ENCODE measurements at regions of chr6 and their contacts with region 1.

Region 1: GRCh38 chr6:47780510-47781356 is 1.1 kb upstream of the OPN5 start:
- DNase-seq: peak; percentile 89
- ATAC-seq: peak; percentile 97
- H3K4me3 ChIP-seq: peak overlapping the region; percentile 39; the same call in 1 of the 2 replicates
- H3K27ac ChIP-seq: no peak overlapping the region
- H3K4me1 ChIP-seq: peaks cover 10% of the 10 kb centered on the region
- H3K27me3 ChIP-seq: no peaks in the 10 kb centered on the region
- CTCF ChIP-seq: peak; percentile 92

Region 2: GRCh38 chr6:47631269-47631772 is 149.4 kb before region 1 on chr6:
- CTCF ChIA-PET with region 1: interaction called, 6 read pairs
- POLR2A ChIA-PET with region 1: no interaction called
- intact Hi-C with region 1: loop called (anchors 1 kb)
- DNase-seq: peak; percentile 92
- ATAC-seq: peak; percentile 61
- H3K4me3 ChIP-seq: no peak overlapping the region
- H3K27ac ChIP-seq: no peak overlapping the region
- H3K4me1 ChIP-seq: peaks cover 4% of the 10 kb centered on the region
- H3K27me3 ChIP-seq: no peaks in the 10 kb centered on the region
- CTCF ChIP-seq: peak; percentile 74

Region 3: DNA sequence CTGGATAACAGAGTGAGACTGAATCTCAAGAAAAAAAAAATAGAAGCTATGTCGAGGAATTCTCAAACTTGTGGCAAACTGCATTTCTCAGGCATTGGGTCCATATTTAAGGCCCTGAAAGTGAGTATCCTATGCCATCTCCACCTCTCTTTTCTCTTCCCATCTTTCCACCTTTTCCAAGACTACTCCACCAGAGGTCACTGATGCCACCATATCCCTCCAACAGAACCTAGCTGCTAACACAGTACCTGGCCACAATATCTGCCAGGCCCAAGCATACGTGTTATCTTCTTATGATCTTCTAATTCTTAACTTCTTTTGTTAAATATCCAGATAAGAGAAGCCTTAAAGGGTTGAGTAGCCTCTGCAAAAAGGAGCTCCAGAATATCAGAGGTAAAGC is 90.5 kb before region 1 on chr6:
- CTCF ChIA-PET with region 1: interaction called, 3 read pairs
- POLR2A ChIA-PET with region 1: no interaction called
- intact Hi-C with region 1: loop called (anchors 1 kb)
- DNase-seq: peak; percentile 48
- ATAC-seq: peak; percentile 80
- H3K4me3 ChIP-seq: no peak overlapping the region
- H3K27ac ChIP-seq: no peak overlapping the region
- H3K4me1 ChIP-seq: no peaks in the 10 kb centered on the region
- H3K27me3 ChIP-seq: no peaks in the 10 kb centered on the region
- CTCF ChIP-seq: peak; percentile 50

Region 4: DNA sequence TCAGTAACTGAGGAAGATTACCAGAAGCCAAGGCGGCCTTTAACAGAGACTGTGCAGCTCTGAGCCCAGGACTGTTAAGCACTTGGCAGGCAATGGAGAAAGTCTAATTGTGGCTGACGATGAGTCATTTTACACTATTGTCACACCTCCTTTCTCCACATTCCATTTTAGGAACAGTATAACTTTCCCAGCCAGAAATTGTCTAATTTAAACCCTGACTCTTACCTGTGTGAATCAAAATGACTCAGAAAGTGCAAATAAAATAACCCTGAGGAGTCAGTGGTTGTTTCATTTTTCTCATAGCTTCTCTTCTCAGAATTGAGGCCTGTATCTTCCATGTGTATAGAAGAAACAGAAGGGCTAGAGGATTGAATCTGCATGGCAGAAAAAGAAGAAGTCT is 38.9 kb before region 1 on chr6:
- CTCF ChIA-PET with region 1: interaction called, 3 read pairs
- POLR2A ChIA-PET with region 1: no interaction called
- intact Hi-C with region 1: loop called (anchors 1 kb)
- DNase-seq: peak; percentile 97
- ATAC-seq: peak; percentile 86
- H3K4me3 ChIP-seq: 0 out of 2 replicates have a peak overlapping the region, but pooled peaks have one; percentile 15
- H3K27ac ChIP-seq: peak overlapping the region; percentile 96
- H3K4me1 ChIP-seq: peaks cover 45% of the 10 kb centered on the region
- H3K27me3 ChIP-seq: no peaks in the 10 kb centered on the region
- CTCF ChIP-seq: no peak

Region 5: DNA sequence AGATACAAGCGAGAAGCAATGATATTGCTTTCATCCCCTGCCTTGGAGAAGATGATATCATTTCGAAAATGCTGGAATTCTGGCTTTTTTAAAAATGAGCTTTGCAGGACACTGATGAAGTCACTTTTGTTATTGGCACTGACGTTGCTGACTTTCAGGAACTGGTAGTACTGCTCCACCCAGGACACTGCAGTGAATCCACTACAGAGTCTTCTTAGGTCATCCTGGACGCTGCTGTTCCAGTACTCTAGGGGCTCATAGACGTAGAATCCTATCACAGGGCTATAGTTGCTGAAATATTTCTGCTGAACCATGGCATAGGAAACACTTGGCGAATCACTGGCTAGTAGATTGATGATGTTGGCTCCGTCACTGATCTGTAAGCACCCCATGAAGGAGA is 98.3 kb after region 1 on chr6:
- CTCF ChIA-PET with region 1: no interaction called
- POLR2A ChIA-PET with region 1: no interaction called
- intact Hi-C with region 1: no loop called
- DNase-seq: no peak
- ATAC-seq: no peak
- H3K4me3 ChIP-seq: no peak overlapping the region
- H3K27ac ChIP-seq: no peak overlapping the region
- H3K4me1 ChIP-seq: no peaks in the 10 kb centered on the region
- H3K27me3 ChIP-seq: no peaks in the 10 kb centered on the region; the same call in 1 of the 2 replicates
- CTCF ChIP-seq: no peak

Region 6: GRCh38 chr6:48080227-48081009 is 299.7 kb after region 1 on chr6:
- CTCF ChIA-PET with region 1: no interaction called
- POLR2A ChIA-PET with region 1: no interaction called
- intact Hi-C with region 1: no loop called
- DNase-seq: peak; percentile 93
- ATAC-seq: peak; percentile 78
- H3K4me3 ChIP-seq: no peak overlapping the region
- H3K27ac ChIP-seq: peak overlapping the region; percentile 52
- H3K4me1 ChIP-seq: peaks cover 41% of the 10 kb centered on the region
- H3K27me3 ChIP-seq: no peaks in the 10 kb centered on the region
- CTCF ChIP-seq: no peak

Region 7: DNA sequence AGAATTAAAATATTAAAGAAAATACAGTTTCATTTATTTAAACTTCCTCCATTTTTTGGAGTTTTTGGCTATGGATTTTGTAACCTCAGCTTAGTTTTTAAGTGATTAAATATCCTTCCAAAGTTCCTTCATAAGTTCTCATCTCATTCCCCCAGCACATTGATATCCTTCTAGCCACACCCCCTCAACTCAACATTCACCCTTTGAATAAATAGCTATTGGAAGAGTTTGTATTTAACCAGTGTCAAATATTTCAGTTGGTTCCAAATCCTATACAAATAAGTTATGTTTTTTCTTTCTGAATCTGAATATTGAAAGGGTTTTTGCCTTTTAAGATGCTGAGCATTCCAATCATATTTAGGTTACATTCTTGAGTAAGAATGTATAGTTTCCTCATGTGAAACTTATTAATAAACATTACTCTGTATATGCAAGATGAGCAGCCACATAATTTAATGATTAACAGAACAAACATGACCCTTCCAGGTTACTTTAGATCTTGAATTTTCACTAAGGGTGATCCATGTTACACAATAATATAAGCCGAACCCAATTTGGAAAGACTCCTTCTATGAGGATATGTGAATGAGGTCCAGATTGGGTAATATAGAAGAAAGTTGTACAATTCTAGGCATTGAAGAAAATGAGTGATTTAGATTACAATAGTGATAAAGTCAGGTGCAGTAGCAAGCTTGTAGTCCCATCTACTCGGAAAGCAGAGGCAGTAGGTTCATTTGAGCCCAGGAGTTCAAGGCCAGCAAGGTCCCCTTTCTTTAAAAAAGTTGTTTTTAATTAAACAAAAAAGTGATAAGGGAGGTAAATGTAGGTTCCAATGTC is 1732.6 kb after region 1 on chr6:
- CTCF ChIA-PET with region 1: no interaction called
- POLR2A ChIA-PET with region 1: no interaction called
- intact Hi-C with region 1: no loop called
- DNase-seq: peak; percentile 35
- ATAC-seq: no peak
- H3K4me3 ChIP-seq: no peak overlapping the region
- H3K27ac ChIP-seq: no peak overlapping the region
- H3K4me1 ChIP-seq: peaks cover 34% of the 10 kb centered on the region
- H3K27me3 ChIP-seq: no peaks in the 10 kb centered on the region
- CTCF ChIP-seq: no peak

Measured in PC-3 (cell line).